Astrocyte of the spinal cord (primary cell): ENCODE measurements at regions of chr11 and their contacts with region 1.

Region 1: DNA sequence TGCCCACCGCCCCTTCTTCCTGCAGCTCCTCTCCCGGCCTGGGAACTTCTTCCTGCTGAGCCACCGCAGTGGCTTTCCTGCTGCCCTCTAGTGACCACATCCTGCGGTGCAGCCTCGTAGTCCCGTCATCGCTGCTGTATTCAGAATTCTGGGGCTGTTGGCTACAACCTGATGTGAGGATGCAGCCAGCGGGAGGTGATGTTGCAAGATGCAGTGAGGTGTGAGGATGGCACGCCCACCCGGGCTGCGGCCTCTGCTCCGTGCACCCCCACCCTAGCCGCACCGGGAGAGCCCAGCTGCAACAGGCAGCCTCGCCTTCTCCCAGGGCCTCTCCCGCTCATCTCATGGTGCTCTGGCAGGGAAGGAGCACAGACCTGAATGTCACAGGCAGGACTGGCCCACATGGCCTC is 10.1 kb downstream of the CHST1 start:
- DNase-seq: peak; percentile 69
- H3K4me3 ChIP-seq: no peak overlapping the region
- CTCF ChIP-seq: peak; percentile 98

Region 2: DNA sequence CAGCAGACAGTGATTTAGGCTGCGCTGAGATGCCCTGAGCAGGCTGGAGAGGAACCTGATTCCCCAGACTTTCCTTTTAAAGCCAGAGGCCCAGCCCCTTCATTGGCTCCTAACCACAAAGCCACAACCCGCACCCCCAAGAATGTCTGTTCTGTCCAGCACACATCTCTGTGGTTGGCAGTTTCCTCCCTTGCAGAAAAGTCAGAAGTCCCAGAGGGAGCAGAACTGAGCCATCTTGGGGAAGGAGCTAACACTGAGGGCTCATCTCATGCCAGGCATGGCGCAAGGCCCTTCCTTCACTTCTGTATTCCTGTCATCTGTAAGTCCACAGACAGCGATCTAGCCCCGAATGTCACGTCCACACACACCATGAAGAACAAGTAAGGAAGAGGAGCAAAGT is 272.1 kb before region 1 on chr11:
- in situ Hi-C with region 1: loop called (anchors 25 kb)
- DNase-seq: peak; percentile 58
- H3K4me3 ChIP-seq: no peak overlapping the region
- CTCF ChIP-seq: no peak